ENCODE measurements at regions of chr3 and their contacts with region 1.

Region 1: DNA sequence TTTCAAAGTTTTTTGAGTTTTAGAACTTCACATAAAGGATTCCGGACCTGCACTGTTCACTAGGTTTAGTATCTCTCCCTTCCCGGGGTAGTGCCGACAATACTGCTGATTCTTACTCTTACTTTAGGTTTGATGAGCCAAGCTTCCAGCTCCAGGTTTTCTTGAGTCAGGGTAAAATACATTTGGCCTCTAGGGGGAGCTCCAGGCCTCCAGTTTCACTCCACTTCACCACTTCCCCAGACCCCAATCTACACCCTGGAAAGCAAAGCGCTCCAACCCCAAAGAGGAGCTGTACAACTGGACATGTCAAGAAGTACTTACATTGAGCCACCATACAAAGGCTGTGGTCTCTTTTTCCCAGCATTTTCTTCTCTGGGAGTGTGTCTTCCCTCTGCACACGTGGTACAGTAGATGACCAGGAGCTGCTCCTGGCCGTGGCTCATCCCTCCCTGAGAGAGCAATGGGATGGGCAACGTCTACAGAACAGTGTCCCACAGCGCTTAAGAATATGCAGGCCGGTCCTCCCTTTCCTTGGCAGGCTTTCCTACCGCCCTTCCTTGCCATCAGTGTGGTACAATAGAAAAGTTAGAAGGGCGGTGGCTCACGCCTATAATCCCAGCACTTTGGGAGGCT is 93.9 kb upstream of the CCDC80 start:
- DNase-seq: no peak
- H3K4me3 ChIP-seq: no peak overlapping the region
- H3K27ac ChIP-seq: no peak overlapping the region
- H3K4me1 ChIP-seq: no peaks in the 10 kb centered on the region
- H3K27me3 ChIP-seq: no peaks in the 10 kb centered on the region
- CTCF ChIP-seq: peak in 1 of 3 donors; percentile 40
- POLR2A ChIP-seq: no peak

Region 2: DNA sequence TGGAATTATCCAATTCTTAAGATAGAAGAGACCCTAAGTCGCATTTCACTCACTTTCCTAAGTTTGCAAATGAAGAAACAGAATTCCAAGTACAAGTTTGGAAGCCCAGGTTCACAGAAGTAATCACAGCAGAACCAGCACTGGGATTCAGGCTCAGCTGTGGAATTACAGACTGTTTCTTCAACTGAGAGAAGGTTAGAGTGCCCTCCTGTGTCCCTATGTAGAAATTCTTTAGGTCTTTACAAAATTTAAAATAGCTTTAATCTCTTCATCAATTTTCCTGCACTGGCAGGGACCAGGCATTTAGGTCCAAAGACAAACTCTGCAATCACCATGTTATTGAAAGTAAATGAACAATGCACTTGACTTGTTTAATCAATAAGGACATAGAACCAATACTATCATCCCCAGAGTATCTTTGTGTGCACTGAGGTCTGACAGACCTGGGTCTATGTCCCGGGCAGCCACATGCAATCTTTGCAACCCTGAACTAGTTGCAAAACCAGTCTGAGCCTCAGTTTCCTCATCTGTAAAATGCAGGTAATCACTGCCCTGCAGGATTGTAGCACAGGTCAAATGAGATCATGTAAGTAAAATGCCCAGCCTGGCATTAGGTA is 1043.4 kb before region 1 on chr3:
- intact Hi-C with region 1: no loop called
- DNase-seq: no peak
- H3K4me3 ChIP-seq: no peak overlapping the region
- H3K27ac ChIP-seq: no peak overlapping the region
- H3K4me1 ChIP-seq: no peaks in the 10 kb centered on the region
- H3K27me3 ChIP-seq: no peaks in the 10 kb centered on the region
- CTCF ChIP-seq: no peak
- POLR2A ChIP-seq: no peak

Region 3: DNA sequence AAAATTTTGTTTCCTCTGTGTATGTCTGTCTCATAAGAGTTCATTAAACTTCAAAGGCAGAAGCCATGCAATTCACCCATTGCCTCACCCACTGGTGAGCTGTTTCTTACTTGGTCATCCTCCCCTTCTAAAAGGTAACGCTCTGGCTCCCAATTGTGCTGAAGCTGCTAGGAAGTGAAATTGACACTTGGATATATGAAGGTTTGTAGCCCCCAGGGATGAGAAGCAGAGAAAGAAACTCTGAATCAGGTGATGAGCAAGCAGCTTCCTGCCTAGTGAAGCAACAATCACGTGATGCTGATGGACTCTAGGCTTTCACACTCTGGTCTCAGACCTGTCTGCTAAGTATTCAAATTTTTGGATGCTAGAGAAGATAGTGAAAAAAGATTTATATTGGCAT is 41.2 kb after region 1 on chr3:
- intact Hi-C with region 1: loop called (anchors 1 kb)
- DNase-seq: no peak
- H3K4me3 ChIP-seq: no peak overlapping the region
- H3K27ac ChIP-seq: peak overlapping the region in 1 of 2 donors; percentile 61
- H3K4me1 ChIP-seq: no peaks in the 10 kb centered on the region
- H3K27me3 ChIP-seq: no peaks in the 10 kb centered on the region
- CTCF ChIP-seq: no peak
- POLR2A ChIP-seq: no peak